ENCODE measurements at regions of chrX and their contacts with region 1.

Region 1: GRCh38 chrX:37825209-37825842 is 22.0 kb downstream of the DYNLT3 start:
- DNase-seq: no peak
- ATAC-seq: no peak

Region 2: GRCh38 chrX:37745354-37745753 is 80.0 kb before region 1 on chrX:
- intact Hi-C with region 1: loop called (anchors 10 kb)
- DNase-seq: peak; percentile 77
- ATAC-seq: peak; percentile 71

Region 3: DNA sequence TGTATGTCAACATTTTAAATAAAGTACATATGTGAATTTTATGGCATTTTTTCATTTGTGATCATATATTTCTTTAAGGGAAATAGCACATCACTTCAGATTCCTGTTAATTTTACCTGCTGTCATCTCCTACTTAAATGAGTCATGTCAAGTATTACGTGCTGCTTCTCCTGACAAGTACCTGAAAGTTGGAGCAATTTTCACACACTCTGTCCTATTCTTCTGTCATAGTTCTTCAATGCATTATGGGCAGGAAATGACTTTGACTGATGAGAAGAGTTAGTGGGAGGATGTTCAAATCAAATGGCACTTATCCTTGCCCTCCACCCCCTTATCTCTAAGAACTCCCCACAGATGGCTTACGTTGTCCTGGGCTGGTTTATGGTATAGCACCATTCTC is 116.8 kb after region 1 on chrX:
- intact Hi-C with region 1: no loop called
- DNase-seq: no peak
- ATAC-seq: no peak